Ascending aorta (tissue), 2 donors: ENCODE measurements at regions of chr4 and their contacts with region 1.

Region 1: GRCh38 chr4:118278473-118279274 is 74.1 kb downstream of the PRSS12 start:
- DNase-seq: peak; percentile 88 to 97
- H3K4me3 ChIP-seq: peak overlapping the region; percentile 84 to 87
- H3K27ac ChIP-seq: peak overlapping the region; percentile 92 to 94
- H3K4me1 ChIP-seq: peaks cover 0 to 6% of the 10 kb centered on the region in 2 donors
- H3K27me3 ChIP-seq: no peaks in the 10 kb centered on the region
- CTCF ChIP-seq: no peak

Region 2: GRCh38 chr4:118206627-118207026 is 72.0 kb before region 1 on chr4:
- intact Hi-C with region 1: no loop called
- DNase-seq: no peak
- H3K4me3 ChIP-seq: no peak overlapping the region
- H3K27ac ChIP-seq: no peak overlapping the region
- H3K4me1 ChIP-seq: no peaks in the 10 kb centered on the region
- H3K27me3 ChIP-seq: no peaks in the 10 kb centered on the region
- CTCF ChIP-seq: no peak

Region 3: GRCh38 chr4:118589471-118590055 is 310.9 kb after region 1 on chr4:
- intact Hi-C with region 1: loop called (anchors 2 kb)
- DNase-seq: no peak
- H3K4me3 ChIP-seq: no peak overlapping the region
- H3K27ac ChIP-seq: no peak overlapping the region
- H3K4me1 ChIP-seq: no peaks in the 10 kb centered on the region
- H3K27me3 ChIP-seq: no peaks in the 10 kb centered on the region
- CTCF ChIP-seq: no peak